GM12878 (cell line): ENCODE measurements at regions of chr14 and their contacts with region 1.

Region 1: GRCh38 chr14:25056688-25057078 is 6.7 kb upstream of the STXBP6 start:
- DNase-seq: no peak
- ATAC-seq: peak; percentile 79
- H3K4me3 ChIP-seq: no peak overlapping the region
- H3K27ac ChIP-seq: no peak overlapping the region
- H3K4me1 ChIP-seq: no peaks in the 10 kb centered on the region
- H3K27me3 ChIP-seq: peaks cover 0 to 7% of the 10 kb centered on the region in 2 experiments; a peak in 1 of 4 replicates
- CTCF ChIP-seq: no peak
- EP300 ChIP-seq: no peak
- POLR2A ChIP-seq: no peak
- RAD21 ChIP-seq: no peak

Region 2: GRCh38 chr14:25094171-25094907 is 37.7 kb after region 1 on chr14:
- CTCF ChIA-PET with region 1: no interaction called
- POLR2A ChIA-PET with region 1: no interaction called
- RAD21 ChIA-PET with region 1: no interaction called
- SMC1A ChIA-PET with region 1: interaction called, 10 read pairs
- in situ Hi-C with region 1: no loop called
- intact Hi-C with region 1: no loop called
- DNase-seq: no peak
- ATAC-seq: no peak
- H3K4me3 ChIP-seq: no peak overlapping the region
- H3K27ac ChIP-seq: no peak overlapping the region
- H3K4me1 ChIP-seq: no peaks in the 10 kb centered on the region
- H3K27me3 ChIP-seq: no peaks in the 10 kb centered on the region
- CTCF ChIP-seq: no peak
- EP300 ChIP-seq: no peak
- POLR2A ChIP-seq: no peak
- RAD21 ChIP-seq: no peak